Activated T-helper 2 cell treated with anti-CD3 and anti-CD28 coated beads, Interferon-gamma antibody, Interleukin-2, Interleukin-4, amounts not matched to agents 10 μg/mL and 5 μg/mL and 100 μg/mL, durations not matched to agents 14 hours and 24 hours and 36 hours (primary cell): ENCODE measurements at regions of chr2 and their contacts with region 1.

Region 1: GRCh38 chr2:36858551-36859365 is 107.6 kb downstream of the STRN start:
- DNase-seq: no peak
- H3K4me3 Mint-ChIP-seq: no peak overlapping the region
- H3K27ac Mint-ChIP-seq: peak overlapping the region; percentile 43
- H3K4me1 Mint-ChIP-seq: peaks cover 16% of the 10 kb centered on the region
- H3K27me3 Mint-ChIP-seq: no peaks in the 10 kb centered on the region

Region 2: DNA sequence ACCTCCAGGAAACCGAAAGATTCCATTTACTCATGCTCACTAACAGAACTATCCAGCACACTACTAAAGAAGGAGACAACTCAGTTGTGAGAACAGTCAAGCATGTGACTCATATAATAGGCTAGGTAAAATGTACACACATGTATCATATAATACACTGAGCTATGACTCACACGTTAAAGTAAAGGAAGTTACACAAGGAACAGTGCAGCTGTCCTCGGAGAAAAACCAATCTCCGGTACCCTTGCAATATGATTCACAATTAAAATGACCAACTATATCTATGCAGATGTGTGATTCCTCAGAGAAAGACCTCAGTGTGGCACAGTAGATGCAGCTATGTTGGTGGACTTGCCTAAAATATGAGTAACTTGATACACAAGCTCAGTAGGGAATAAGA is 31.0 kb after region 1 on chr2:
- intact Hi-C with region 1: loop called (anchors 1 kb)
- DNase-seq: no peak
- H3K4me3 Mint-ChIP-seq: no peak overlapping the region
- H3K27ac Mint-ChIP-seq: peak overlapping the region; percentile 55
- H3K4me1 Mint-ChIP-seq: peaks cover 5% of the 10 kb centered on the region
- H3K27me3 Mint-ChIP-seq: no peaks in the 10 kb centered on the region

Region 3: GRCh38 chr2:37005118-37005868 is 146.5 kb after region 1 on chr2:
- intact Hi-C with region 1: loop called (anchors 10 kb)
- DNase-seq: peak; percentile 11
- H3K4me3 Mint-ChIP-seq: peak overlapping the region; percentile 7
- H3K27ac Mint-ChIP-seq: peak overlapping the region; percentile 10
- H3K4me1 Mint-ChIP-seq: peaks cover 11% of the 10 kb centered on the region
- H3K27me3 Mint-ChIP-seq: no peaks in the 10 kb centered on the region